SK-N-SH (cell line): ENCODE measurements at regions of chr2 and their contacts with region 1.

Region 1: GRCh38 chr2:95345566-95346230 is 48.6 kb downstream of the KCNIP3 start:
- DNase-seq: peak; percentile 95
- H3K4me3 ChIP-seq: peak overlapping the region; percentile 51 to 70
- H3K27ac ChIP-seq: no peak overlapping the region
- H3K4me1 ChIP-seq: peaks cover 4 to 7% of the 10 kb centered on the region in 2 experiments; a peak in 2 of 4 replicates
- H3K27me3 ChIP-seq: peaks cover 68% of the 10 kb centered on the region
- CTCF ChIP-seq: peak; percentile 81
- EP300 ChIP-seq: no peak
- RAD21 ChIP-seq: peak; percentile 70

Region 2: GRCh38 chr2:95231723-95232122 is 114.0 kb before region 1 on chr2:
- CTCF ChIA-PET with region 1: interaction called, 19 read pairs
- POLR2A ChIA-PET with region 1: no interaction called
- DNase-seq: peak; percentile 80
- H3K4me3 ChIP-seq: peak overlapping the region in 1 of 2 experiments; percentile 40; a peak in 1 of 4 replicates
- H3K27ac ChIP-seq: no peak overlapping the region
- H3K4me1 ChIP-seq: no peaks in the 10 kb centered on the region
- H3K27me3 ChIP-seq: no peaks in the 10 kb centered on the region
- CTCF ChIP-seq: peak; percentile 67
- EP300 ChIP-seq: no peak
- RAD21 ChIP-seq: peak; percentile 86

Region 3: GRCh38 chr2:95329891-95330780 is 15.6 kb before region 1 on chr2:
- CTCF ChIA-PET with region 1: interaction called, 40 read pairs
- POLR2A ChIA-PET with region 1: no interaction called
- DNase-seq: peak; percentile 45
- H3K4me3 ChIP-seq: no peak overlapping the region
- H3K27ac ChIP-seq: no peak overlapping the region
- H3K4me1 ChIP-seq: no peaks in the 10 kb centered on the region; a peak in 1 of 4 replicates
- H3K27me3 ChIP-seq: no peaks in the 10 kb centered on the region
- CTCF ChIP-seq: 0 out of 2 replicates have a peak, but pooled peaks have one; percentile 9
- EP300 ChIP-seq: no peak
- RAD21 ChIP-seq: no peak

Region 4: GRCh38 chr2:95359031-95359430 is 13.3 kb after region 1 on chr2:
- CTCF ChIA-PET with region 1: interaction called, 26 read pairs
- POLR2A ChIA-PET with region 1: no interaction called
- DNase-seq: no peak
- H3K4me3 ChIP-seq: no peak overlapping the region
- H3K27ac ChIP-seq: no peak overlapping the region
- H3K4me1 ChIP-seq: no peaks in the 10 kb centered on the region
- H3K27me3 ChIP-seq: peaks cover 5% of the 10 kb centered on the region; the same call in 1 of the 2 replicates
- CTCF ChIP-seq: no peak
- EP300 ChIP-seq: no peak
- RAD21 ChIP-seq: no peak

Region 5: DNA sequence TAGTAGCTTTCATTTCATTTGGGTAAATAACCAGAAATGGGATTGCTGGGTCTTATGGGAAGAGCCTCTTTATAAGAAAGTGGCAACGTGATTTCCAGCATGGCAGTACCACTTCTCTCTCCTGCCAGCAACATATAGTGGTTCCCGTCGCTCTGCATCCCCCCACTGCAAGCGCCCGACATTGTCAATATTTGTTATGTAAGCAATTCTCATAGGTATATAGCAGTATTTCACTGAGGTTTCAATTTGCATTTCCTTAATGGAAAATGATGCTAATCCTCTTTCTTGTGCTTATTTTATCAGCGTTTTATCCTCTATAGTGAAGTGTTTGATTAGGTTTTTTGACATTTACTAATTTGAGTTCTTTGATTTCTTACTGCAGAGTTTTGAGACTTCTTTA is 20.8 kb after region 1 on chr2:
- CTCF ChIA-PET with region 1: interaction called, 11 read pairs
- POLR2A ChIA-PET with region 1: no interaction called
- DNase-seq: peak; percentile 8
- H3K4me3 ChIP-seq: 0 out of 4 replicates have a peak overlapping the region, but pooled peaks of 1 of the 2 experiments have one; percentile 3
- H3K27ac ChIP-seq: no peak overlapping the region
- H3K4me1 ChIP-seq: no peaks in the 10 kb centered on the region
- H3K27me3 ChIP-seq: peaks cover 15% of the 10 kb centered on the region; the same call in 1 of the 2 replicates
- CTCF ChIP-seq: no peak
- EP300 ChIP-seq: no peak
- RAD21 ChIP-seq: no peak

Region 6: GRCh38 chr2:96773922-96774321 is 1428.2 kb after region 1 on chr2:
- CTCF ChIA-PET with region 1: no interaction called
- POLR2A ChIA-PET with region 1: no interaction called
- DNase-seq: no peak
- H3K4me3 ChIP-seq: no peak overlapping the region
- H3K27ac ChIP-seq: no peak overlapping the region
- H3K4me1 ChIP-seq: peaks cover 0 to 15% of the 10 kb centered on the region in 2 experiments; a peak in 1 of 4 replicates
- H3K27me3 ChIP-seq: no peaks in the 10 kb centered on the region
- CTCF ChIP-seq: no peak
- EP300 ChIP-seq: no peak
- RAD21 ChIP-seq: no peak